ENCODE measurements at regions of chr3 and their contacts with region 1.

Region 1: GRCh38 chr3:138834359-138835212 is at the start of gene PIK3CB:
- DNase-seq: peak; percentile 79 to 98 (median 88)

Region 2: GRCh38 chr3:138594150-138594934 is 240.2 kb before region 1 on chr3 and contains the start of gene CEP70:
- intact Hi-C with region 1: loop called (anchors 10 kb)
- DNase-seq: peak; percentile 80 to 98 (median 91)

Region 3: GRCh38 chr3:138694287-138695007 is 140.1 kb before region 1 on chr3:
- intact Hi-C with region 1: loop called (anchors 10 kb)
- DNase-seq: no peak

Region 4: GRCh38 chr3:138774529-138775253 is 59.9 kb before region 1 on chr3:
- intact Hi-C with region 1: loop called (anchors 2 kb)
- DNase-seq: peak in 6 of 10 donors; percentile 37 to 81 (median 50)